ENCODE measurements at regions of chr11 and their contacts with region 1.

Region 1: DNA sequence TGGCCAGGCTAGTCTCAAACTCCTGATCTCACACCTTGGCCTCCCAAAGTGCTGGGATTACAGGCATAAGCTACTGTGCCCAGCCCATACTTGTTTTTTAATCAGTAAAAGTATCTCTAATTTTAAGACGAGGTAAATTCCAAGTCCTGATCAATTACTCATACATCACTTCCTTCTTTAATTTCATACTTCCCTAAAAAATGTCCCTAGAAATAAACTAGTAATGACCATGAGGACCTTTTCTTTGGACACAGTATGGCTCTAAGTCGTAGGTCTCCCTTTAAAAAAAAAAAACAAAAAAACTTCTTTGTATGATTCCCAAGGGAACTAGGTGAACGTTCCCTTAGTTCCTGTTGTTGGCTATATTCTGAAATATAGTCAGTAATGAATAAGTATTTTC is 29.8 kb downstream of the NUP98 start:
- DNase-seq: no peak
- H3K4me3 ChIP-seq: no peak overlapping the region
- H3K27ac ChIP-seq: no peak overlapping the region
- H3K4me1 ChIP-seq: no peaks in the 10 kb centered on the region
- CTCF ChIP-seq: no peak

Region 2: DNA sequence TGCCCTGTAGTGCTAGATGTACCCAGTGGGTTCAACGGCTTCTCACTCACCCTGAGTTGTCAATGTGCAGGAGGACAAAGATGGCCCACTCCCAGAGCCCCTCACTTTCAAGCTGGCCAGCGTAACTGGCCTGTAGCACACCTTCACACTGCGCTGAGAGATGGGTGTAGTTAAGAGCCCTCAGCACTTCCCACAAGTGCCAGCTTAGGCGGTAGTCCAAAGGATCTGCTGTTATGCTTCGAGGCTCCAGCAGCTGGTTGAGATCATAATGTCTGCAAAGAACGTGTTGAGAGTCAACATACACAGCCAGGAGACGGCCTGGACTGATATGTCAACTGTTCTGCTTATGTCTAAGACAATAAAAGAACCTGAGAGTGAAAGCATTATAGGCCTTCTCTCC is 81.6 kb before region 1 on chr11:
- CTCF ChIA-PET with region 1: no interaction called
- POLR2A ChIA-PET with region 1: no interaction called
- intact Hi-C with region 1: no loop called
- DNase-seq: no peak
- H3K4me3 ChIP-seq: no peak overlapping the region
- H3K27ac ChIP-seq: no peak overlapping the region
- H3K4me1 ChIP-seq: no peaks in the 10 kb centered on the region
- CTCF ChIP-seq: no peak

Region 3: DNA sequence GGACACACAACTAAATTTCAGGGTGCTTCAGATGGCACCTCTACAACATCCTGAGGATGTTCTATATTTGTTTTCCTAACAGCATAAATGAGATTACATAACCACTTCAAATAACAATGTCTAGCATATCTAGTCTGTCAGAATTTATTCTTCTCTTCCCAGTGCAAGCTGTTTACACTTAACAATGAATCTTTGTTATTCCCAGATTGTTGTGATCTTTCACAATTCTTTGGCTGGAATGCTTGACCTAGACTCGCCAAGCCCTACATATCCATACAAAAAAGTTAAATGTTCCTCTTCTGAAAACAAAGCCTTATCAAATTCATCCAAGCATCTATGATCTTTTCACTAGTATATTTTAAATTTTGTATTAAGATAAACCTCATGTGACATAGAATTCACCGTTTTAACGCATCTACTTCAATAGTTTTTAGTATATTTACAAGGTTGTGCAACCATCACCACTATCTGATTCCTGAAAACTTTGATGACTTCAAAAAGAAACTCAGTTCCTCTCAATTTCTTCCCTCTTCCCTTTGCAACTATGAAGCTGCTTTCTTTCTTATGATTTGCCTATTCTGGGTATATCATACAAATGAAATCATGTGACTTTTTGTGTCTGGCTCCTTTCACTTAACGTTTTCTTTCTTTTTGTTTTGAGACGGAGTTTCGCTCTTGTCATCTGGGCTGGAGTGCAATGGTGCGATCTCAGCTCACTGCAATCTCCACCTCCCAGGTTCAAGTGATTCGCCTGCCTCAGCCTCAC is 34.7 kb before region 1 on chr11:
- CTCF ChIA-PET with region 1: no interaction called
- POLR2A ChIA-PET with region 1: interaction called, 4 read pairs
- intact Hi-C with region 1: loop called (anchors 5 kb)
- DNase-seq: no peak
- H3K4me3 ChIP-seq: no peak overlapping the region
- H3K27ac ChIP-seq: no peak overlapping the region
- H3K4me1 ChIP-seq: no peaks in the 10 kb centered on the region
- CTCF ChIP-seq: no peak

Region 4: GRCh38 chr11:3849297-3849874 is 81.8 kb after region 1 on chr11:
- CTCF ChIA-PET with region 1: no interaction called
- POLR2A ChIA-PET with region 1: no interaction called
- intact Hi-C with region 1: no loop called
- DNase-seq: peak; percentile 69
- H3K4me3 ChIP-seq: no peak overlapping the region
- H3K27ac ChIP-seq: no peak overlapping the region
- H3K4me1 ChIP-seq: peaks cover 20% of the 10 kb centered on the region
- CTCF ChIP-seq: peak; percentile 91

Region 5: DNA sequence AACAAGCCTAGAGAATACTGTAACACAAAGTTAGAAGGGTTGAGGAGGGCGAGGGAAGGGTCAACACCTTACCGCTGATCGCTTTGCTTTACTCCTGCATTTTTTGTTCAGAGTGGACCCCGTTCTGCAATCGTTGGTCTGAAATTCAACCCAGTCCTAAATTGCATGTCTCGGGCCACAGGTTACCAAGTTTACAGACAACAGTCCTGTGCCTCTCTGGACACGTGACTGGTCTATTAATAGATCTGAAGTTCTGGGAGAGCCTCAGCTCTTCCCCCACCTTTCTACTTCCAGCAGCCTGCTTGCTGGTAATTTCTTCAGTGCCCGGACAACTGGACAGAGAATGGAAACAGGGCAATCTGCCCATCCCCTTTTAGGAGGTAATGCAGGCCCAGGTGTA is 162.1 kb after region 1 on chr11:
- CTCF ChIA-PET with region 1: no interaction called
- POLR2A ChIA-PET with region 1: no interaction called
- intact Hi-C with region 1: no loop called
- DNase-seq: no peak
- H3K4me3 ChIP-seq: no peak overlapping the region
- H3K27ac ChIP-seq: no peak overlapping the region
- H3K4me1 ChIP-seq: peaks cover 19% of the 10 kb centered on the region
- CTCF ChIP-seq: no peak